ENCODE measurements at regions of chr20 and their contacts with region 1.

Region 1: GRCh38 chr20:58087193-58087858 is 141.1 kb downstream of the ANKRD60 start:
- DNase-seq: peak; percentile 43
- CTCF ChIP-seq: peak; percentile 58

Region 2: GRCh38 chr20:57622579-57623377 is 464.5 kb before region 1 on chr20:
- CTCF ChIA-PET with region 1: interaction called, 10 read pairs
- POLR2A ChIA-PET with region 1: no interaction called
- DNase-seq: peak; percentile 62
- CTCF ChIP-seq: peak; percentile 64

Region 3: GRCh38 chr20:57654363-57654997 is 432.8 kb before region 1 on chr20:
- CTCF ChIA-PET with region 1: interaction called, 47 read pairs
- POLR2A ChIA-PET with region 1: no interaction called
- DNase-seq: peak; percentile 89
- CTCF ChIP-seq: peak; percentile 83

Region 4: GRCh38 chr20:58073945-58074856 is 13.1 kb before region 1 on chr20:
- CTCF ChIA-PET with region 1: interaction called, 13 read pairs
- POLR2A ChIA-PET with region 1: no interaction called
- DNase-seq: no peak
- CTCF ChIP-seq: no peak

Region 5: GRCh38 chr20:58117944-58118343 is 30.6 kb after region 1 on chr20:
- CTCF ChIA-PET with region 1: no interaction called
- POLR2A ChIA-PET with region 1: no interaction called
- DNase-seq: no peak
- CTCF ChIP-seq: no peak